ENCODE measurements at regions of chr13 and their contacts with region 1.

Region 1: DNA sequence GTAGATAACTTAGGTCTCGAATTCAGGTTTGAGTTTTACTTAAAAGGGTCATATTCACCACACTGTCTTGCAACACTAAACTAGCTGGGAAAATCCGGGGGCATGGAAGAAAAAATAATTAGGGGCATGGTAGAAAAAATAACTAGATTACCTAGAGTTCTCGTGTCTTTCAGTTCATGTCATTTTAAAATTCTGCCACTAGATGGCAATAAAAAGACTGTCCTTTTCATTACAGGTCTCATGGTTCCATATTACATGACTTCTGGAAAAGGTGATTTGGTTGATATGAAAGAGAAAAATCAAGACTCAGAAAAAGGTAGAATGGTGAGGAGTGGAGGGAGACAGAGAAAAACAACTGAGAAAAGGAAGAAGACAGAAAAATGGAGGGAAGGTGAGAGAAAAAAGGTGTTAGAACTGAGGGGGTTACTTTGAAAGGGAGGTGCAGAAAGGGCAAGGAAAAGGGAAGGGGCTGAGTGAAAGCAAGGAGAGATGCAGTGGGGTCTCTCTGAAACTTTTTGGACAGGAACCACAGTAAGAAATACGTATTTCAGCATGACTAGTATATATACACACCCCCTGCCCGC is 299.0 kb downstream of the KLF12 start:
- DNase-seq: no peak
- H3K4me3 ChIP-seq: no peak overlapping the region
- H3K27ac ChIP-seq: no peak overlapping the region
- H3K4me1 ChIP-seq: peaks cover 0 to 16% (median 7%) of the 10 kb centered on the region in 4 donors
- H3K27me3 ChIP-seq: no peaks in the 10 kb centered on the region
- CTCF ChIP-seq: peak; percentile 61 to 82 (median 78)
- EP300 ChIP-seq: no peak
- POLR2A ChIP-seq: no peak

Region 2: GRCh38 chr13:73399347-73400216 is 435.6 kb before region 1 on chr13:
- in situ Hi-C with region 1: no loop called
- intact Hi-C with region 1: no loop called
- DNase-seq: peak; percentile 63
- H3K4me3 ChIP-seq: no peak overlapping the region
- H3K27ac ChIP-seq: peak overlapping the region; percentile 66 to 73 (median 70)
- H3K4me1 ChIP-seq: peaks cover 0 to 61% (median 25%) of the 10 kb centered on the region in 4 donors
- H3K27me3 ChIP-seq: no peaks in the 10 kb centered on the region
- CTCF ChIP-seq: no peak
- EP300 ChIP-seq: no peak
- POLR2A ChIP-seq: no peak

Region 3: GRCh38 chr13:74280795-74281490 is 445.7 kb after region 1 on chr13:
- in situ Hi-C with region 1: loop called in 3 of 4 experiments (anchors 5 to 25 kb)
- intact Hi-C with region 1: no loop called
- DNase-seq: no peak
- H3K4me3 ChIP-seq: no peak overlapping the region
- H3K27ac ChIP-seq: no peak overlapping the region
- H3K4me1 ChIP-seq: peaks cover 0 to 3% (median 0%) of the 10 kb centered on the region in 4 donors
- H3K27me3 ChIP-seq: no peaks in the 10 kb centered on the region
- CTCF ChIP-seq: no peak
- EP300 ChIP-seq: no peak
- POLR2A ChIP-seq: no peak